ENCODE measurements at regions of chr9 and their contacts with region 1.

Region 1: GRCh38 chr9:136118320-136119060 is at the start of gene TMEM250:
- DNase-seq: peak; percentile 99
- H3K4me3 ChIP-seq: peak within 1 kb of the TSS; percentile 82 to 83
- H3K27ac ChIP-seq: peak within 1 kb of the TSS; percentile 58 to 92
- H3K4me1 ChIP-seq: peaks cover 3 to 20% of the 10 kb centered on the region in 2 experiments; a peak in 1 of 4 replicates
- H3K27me3 ChIP-seq: no peaks in the 10 kb centered on the region
- CTCF ChIP-seq: no peak
- EP300 ChIP-seq: no peak
- RAD21 ChIP-seq: no peak
- polyA plus RNA-seq, gene TMEM250: 22.1 and 25.9 TPM in 2 replicates

Region 2: GRCh38 chr9:135602789-135603481 is 515.6 kb before region 1 on chr9:
- CTCF ChIA-PET with region 1: interaction called, 20 read pairs
- POLR2A ChIA-PET with region 1: no interaction called
- DNase-seq: peak; percentile 68
- H3K4me3 ChIP-seq: no peak overlapping the region; a peak in 1 of 4 replicates
- H3K27ac ChIP-seq: no peak overlapping the region
- H3K4me1 ChIP-seq: peaks cover 0 to 4% of the 10 kb centered on the region in 2 experiments; a peak in 1 of 4 replicates
- H3K27me3 ChIP-seq: no peaks in the 10 kb centered on the region
- CTCF ChIP-seq: peak; percentile 66
- EP300 ChIP-seq: no peak
- RAD21 ChIP-seq: peak; percentile 35

Region 3: DNA sequence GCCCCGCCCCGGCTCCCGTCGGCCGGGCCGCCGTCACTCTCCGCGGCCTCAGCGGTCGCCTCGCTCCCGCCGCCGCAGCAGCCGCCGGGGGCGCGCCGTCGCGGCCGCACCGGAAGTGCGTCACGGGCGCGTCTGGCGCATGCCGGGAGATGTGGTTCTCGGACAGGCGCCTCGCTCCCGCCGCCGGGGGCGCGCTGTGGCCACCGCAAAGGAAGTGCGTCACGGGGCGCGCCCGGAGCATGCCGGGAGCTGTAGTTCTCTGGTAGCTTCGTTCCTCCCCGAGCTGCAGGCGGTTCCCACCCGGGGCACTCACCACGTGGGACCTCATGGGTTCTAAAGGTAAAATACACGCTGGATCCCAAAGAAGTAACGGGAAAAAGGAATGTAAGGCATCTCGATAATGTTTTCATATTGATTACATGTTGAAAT is 157.2 kb before region 1 on chr9 and contains the start of gene UBAC1:
- CTCF ChIA-PET with region 1: interaction called, 174 read pairs
- POLR2A ChIA-PET with region 1: interaction called, 6 read pairs
- DNase-seq: peak; percentile 99
- H3K4me3 ChIP-seq: peak within 1 kb of the TSS; percentile 90 to 96
- H3K27ac ChIP-seq: peak within 1 kb of the TSS; percentile 52 to 77
- H3K4me1 ChIP-seq: peaks cover 0 to 30% of the 10 kb centered on the region in 2 experiments; a peak in 2 of 4 replicates
- H3K27me3 ChIP-seq: no peaks in the 10 kb centered on the region
- CTCF ChIP-seq: no peak; the same call in 1 of the 2 replicates
- EP300 ChIP-seq: no peak
- RAD21 ChIP-seq: no peak
- polyA plus RNA-seq, gene UBAC1: 67.7 and 69.3 TPM in 2 replicates

Region 4: DNA sequence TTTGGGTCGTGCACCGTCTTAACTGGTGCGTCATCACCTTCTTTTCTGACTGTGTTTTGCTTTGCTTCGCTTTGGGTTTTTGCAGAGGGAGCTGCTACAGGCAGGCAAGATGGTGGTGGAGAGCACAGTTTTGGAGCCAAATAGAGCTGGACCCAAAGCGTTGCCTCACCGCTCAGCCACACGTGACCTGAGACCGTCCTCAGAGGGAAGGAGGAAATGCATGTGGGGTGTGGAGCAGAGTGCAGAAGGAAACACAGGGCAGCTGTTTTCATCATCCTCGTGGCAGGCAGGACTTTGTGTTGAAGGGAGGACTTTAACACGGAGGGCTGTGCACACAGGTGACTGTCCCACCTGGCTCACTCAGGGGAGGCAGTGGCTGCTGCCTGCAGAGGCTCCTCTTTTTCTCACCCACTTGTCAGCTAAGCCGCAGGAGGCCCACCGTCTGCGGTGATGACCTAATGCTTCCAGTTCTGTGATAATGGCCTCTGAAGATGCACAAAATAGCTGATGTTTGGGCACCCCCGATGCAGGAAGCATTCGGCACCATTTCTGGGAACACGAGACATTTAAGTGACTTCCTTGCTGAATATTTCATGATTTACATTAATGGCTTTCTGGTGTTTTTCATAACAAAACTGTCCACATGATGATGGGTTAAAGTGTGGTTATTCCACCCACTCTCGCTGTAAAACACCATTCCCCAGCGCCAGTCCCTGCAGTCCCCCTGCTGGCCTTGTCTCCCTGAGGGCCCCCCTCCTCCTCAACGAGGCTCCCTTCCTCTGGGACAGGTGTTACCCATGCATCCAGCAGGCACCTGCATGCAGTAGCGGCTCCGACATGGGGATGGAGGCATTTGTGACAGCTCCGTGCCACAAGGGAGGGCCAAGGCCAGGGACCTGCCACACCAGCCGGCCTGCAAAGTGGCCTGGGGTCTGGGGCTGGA is 144.9 kb before region 1 on chr9:
- CTCF ChIA-PET with region 1: interaction called, 174 read pairs
- POLR2A ChIA-PET with region 1: no interaction called
- DNase-seq: no peak
- H3K4me3 ChIP-seq: no peak overlapping the region
- H3K27ac ChIP-seq: no peak overlapping the region
- H3K4me1 ChIP-seq: peaks cover 12% of the 10 kb centered on the region in 2 experiments; a peak in 2 of 4 replicates
- H3K27me3 ChIP-seq: no peaks in the 10 kb centered on the region
- CTCF ChIP-seq: no peak
- EP300 ChIP-seq: no peak
- RAD21 ChIP-seq: no peak

Region 5: GRCh38 chr9:136081113-136081825 is 37.2 kb before region 1 on chr9:
- CTCF ChIA-PET with region 1: interaction called, 20 read pairs
- POLR2A ChIA-PET with region 1: no interaction called
- DNase-seq: peak; percentile 37
- H3K4me3 ChIP-seq: no peak overlapping the region
- H3K27ac ChIP-seq: no peak overlapping the region
- H3K4me1 ChIP-seq: peaks cover 0 to 18% of the 10 kb centered on the region in 2 experiments; a peak in 1 of 4 replicates
- H3K27me3 ChIP-seq: no peaks in the 10 kb centered on the region
- CTCF ChIP-seq: no peak
- EP300 ChIP-seq: no peak
- RAD21 ChIP-seq: no peak

Region 6: DNA sequence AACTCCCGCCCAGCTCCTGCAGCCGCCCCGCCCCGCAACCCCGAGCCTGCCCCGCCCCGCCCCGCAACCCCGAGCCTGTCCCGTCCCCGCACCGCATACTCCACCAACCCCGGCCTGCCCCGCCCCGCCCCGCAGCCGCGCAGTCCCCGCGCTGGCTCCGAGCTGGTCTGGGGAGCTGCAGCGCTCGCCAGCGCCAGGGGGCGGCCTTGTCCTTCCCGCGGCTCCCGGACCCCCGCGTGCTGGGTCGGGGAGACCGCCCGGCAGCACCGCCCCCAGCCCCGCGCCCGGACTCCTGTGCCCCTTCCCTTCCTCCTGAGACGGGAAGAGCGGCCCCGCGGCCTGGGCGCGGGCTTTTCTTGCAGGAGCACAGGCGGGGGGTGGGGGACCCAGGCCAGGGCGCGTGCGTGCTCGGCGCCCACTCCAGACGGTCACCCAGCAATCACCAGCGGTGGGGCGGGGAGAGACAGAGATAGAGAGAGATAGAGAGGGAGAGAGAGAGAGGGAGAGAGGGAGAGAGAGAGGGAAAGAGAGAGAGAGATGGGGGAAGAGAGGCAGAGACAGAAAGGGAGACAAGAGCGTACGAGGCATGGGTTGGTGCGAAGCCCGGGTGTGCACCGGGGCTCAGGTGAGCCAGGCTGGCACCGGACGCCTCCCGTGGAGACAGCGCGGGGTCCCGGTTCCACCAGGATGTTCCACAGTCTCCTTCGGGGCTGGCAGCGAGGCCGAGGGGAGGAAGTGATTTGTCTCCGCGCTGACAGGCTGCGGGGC is 14.9 kb after region 1 on chr9:
- CTCF ChIA-PET with region 1: interaction called, 48 read pairs
- POLR2A ChIA-PET with region 1: no interaction called
- DNase-seq: peak; percentile 93
- H3K4me3 ChIP-seq: peak overlapping the region; percentile 37 to 57
- H3K27ac ChIP-seq: no peak overlapping the region
- H3K4me1 ChIP-seq: peaks cover 4 to 15% of the 10 kb centered on the region in 2 experiments; a peak in 2 of 4 replicates
- H3K27me3 ChIP-seq: peaks cover 74% of the 10 kb centered on the region
- CTCF ChIP-seq: peak; percentile 53
- EP300 ChIP-seq: no peak
- RAD21 ChIP-seq: peak; percentile 63